CD8-positive, alpha-beta T cell (primary cell): ENCODE measurements at regions of chr22 and their contacts with region 1.

Region 1: DNA sequence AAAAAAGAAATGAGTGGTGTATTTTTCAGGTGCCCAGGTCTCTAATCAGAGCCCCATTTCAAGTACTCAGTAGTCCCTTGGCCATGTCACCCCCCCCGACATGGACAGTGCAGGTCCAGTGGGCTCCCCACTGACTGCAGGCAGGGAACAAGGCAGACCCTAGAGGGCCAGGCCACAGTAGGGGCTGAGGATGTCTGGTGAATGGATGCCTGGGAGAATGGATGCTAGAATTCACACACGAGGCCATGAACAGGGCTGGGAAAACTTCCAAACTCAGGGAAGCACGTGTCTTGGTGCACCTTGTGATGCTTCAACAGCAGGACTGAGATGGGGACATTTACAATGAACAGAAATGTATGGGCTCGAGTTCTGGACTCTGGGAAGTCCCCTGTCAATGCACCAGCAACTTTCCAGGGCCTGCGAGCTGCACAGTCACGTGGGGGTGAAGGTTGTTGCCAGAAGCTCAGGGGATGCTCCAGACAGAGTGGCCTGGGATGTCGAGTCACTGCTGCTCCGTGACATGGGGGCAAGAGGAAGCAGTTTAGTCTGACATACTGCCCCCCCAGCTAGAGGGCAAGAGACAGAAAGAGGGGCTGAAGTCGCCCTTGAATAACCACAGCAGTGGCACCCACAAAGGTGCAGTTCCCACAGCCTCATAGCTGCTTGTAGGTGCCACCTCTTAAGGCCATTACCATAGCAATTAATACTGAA is 3.1 kb downstream of the APOBEC3G start:
- DNase-seq: peak in 5 of 9 experiments; percentile 40 to 85 (median 69)
- ATAC-seq: peak; percentile 17
- H3K4me3 ChIP-seq: peak overlapping the region in 1 of 2 experiments; percentile 83
- H3K4me3 Mint-ChIP-seq: peak overlapping the region; percentile 59
- H3K27ac ChIP-seq: peak overlapping the region in 1 of 2 experiments; percentile 90
- H3K27ac Mint-ChIP-seq: peak overlapping the region; percentile 88
- H3K4me1 ChIP-seq: peaks cover 51% of the 10 kb centered on the region
- H3K4me1 Mint-ChIP-seq: peaks cover 54% of the 10 kb centered on the region
- H3K27me3 ChIP-seq: no peaks in the 10 kb centered on the region
- H3K27me3 Mint-ChIP-seq: no peaks in the 10 kb centered on the region
- CTCF ChIP-seq: no peak

Region 2: GRCh38 chr22:39013942-39014722 is 66.1 kb before region 1 on chr22 and contains the start of gene APOBEC3C:
- CTCF ChIA-PET with region 1: no interaction called
- POLR2A ChIA-PET with region 1: no interaction called
- intact Hi-C with region 1: loop called in 1 of 2 experiments (anchors 5 kb)
- DNase-seq: peak; percentile 35 to 89 (median 78)
- ATAC-seq: peak; percentile 89
- H3K4me3 ChIP-seq: peak within 1 kb of the TSS; percentile 47 to 62
- H3K4me3 Mint-ChIP-seq: peak within 1 kb of the TSS; percentile 88
- H3K27ac ChIP-seq: peak within 1 kb of the TSS; percentile 33 to 83
- H3K27ac Mint-ChIP-seq: peak within 1 kb of the TSS; percentile 91
- H3K4me1 ChIP-seq: peaks cover 18% of the 10 kb centered on the region
- H3K4me1 Mint-ChIP-seq: peaks cover 36% of the 10 kb centered on the region
- H3K27me3 ChIP-seq: no peaks in the 10 kb centered on the region
- H3K27me3 Mint-ChIP-seq: no peaks in the 10 kb centered on the region
- CTCF ChIP-seq: no peak
- total RNA-seq, gene APOBEC3C: 14.1 to 15.8 TPM

Region 3: GRCh38 chr22:39932918-39933649 is 852.9 kb after region 1 on chr22:
- CTCF ChIA-PET with region 1: no interaction called
- POLR2A ChIA-PET with region 1: no interaction called
- intact Hi-C with region 1: no loop called
- DNase-seq: peak in 7 of 9 experiments; percentile 27 to 85 (median 72)
- ATAC-seq: peak; percentile 66
- H3K4me3 ChIP-seq: peak overlapping the region in 1 of 2 experiments; percentile 35
- H3K4me3 Mint-ChIP-seq: peak overlapping the region; percentile 77
- H3K27ac ChIP-seq: peak overlapping the region; percentile 72
- H3K27ac Mint-ChIP-seq: no peak overlapping the region
- H3K4me1 ChIP-seq: peaks cover 98% of the 10 kb centered on the region
- H3K4me1 Mint-ChIP-seq: peaks cover 54% of the 10 kb centered on the region
- H3K27me3 ChIP-seq: no peaks in the 10 kb centered on the region
- H3K27me3 Mint-ChIP-seq: no peaks in the 10 kb centered on the region
- CTCF ChIP-seq: peak; percentile 62